Colonic mucosa (tissue), 4 donors: ENCODE measurements at regions of chr17 and their contacts with region 1.

Region 1: GRCh38 chr17:36591434-36592315 is at the start of gene DHRS11:
- DNase-seq: peak; percentile 91
- H3K4me3 ChIP-seq: peak within 1 kb of the TSS; percentile 99
- H3K27ac ChIP-seq: peak within 1 kb of the TSS; percentile 71
- H3K4me1 ChIP-seq: no peaks in the 10 kb centered on the region
- H3K27me3 ChIP-seq: no peaks in the 10 kb centered on the region
- CTCF ChIP-seq: no peak
- total RNA-seq, gene DHRS11: 147 to 191 TPM

Region 2: DNA sequence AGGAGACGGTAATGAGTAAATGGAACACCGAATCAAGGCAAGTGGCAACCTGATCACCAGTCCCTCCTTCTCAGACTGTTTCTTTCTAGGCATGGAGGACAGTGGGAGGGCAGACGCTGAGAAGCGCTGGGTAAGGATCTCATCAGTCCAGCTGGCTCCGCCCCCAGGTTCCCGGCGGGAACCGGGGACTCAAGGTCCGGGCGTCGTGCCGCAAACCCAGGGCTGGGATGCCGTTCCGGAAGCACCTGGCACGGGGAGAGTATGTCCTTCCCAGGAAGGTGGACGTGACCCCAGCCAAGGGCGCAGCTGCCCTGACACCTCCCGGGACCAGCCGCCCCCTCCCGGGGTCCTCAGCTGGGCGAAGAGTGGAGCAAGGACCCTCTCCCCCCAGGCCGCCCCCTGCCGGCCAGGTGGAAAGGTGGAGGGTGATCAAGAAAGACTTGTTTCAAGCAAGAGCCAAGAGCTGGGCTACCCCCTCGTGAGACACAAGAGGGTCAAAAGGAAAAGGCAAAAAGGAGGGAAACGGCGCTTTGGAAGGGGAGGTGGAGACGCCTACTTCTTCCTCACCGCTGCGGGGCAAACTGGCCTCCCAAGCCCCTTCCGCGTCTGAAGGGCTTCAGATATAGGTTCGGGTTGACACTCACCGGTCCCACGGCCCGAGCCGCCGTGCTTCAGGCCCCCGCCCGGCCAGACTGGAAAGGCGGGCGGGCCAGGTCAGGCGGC is 57.4 kb before region 1 on chr17:
- intact Hi-C with region 1: no loop called
- DNase-seq: peak; percentile 81
- H3K4me3 ChIP-seq: peak overlapping the region; percentile 87
- H3K27ac ChIP-seq: peak overlapping the region; percentile 93
- H3K4me1 ChIP-seq: peaks cover 4% of the 10 kb centered on the region
- H3K27me3 ChIP-seq: no peaks in the 10 kb centered on the region
- CTCF ChIP-seq: peak; percentile 52

Region 3: DNA sequence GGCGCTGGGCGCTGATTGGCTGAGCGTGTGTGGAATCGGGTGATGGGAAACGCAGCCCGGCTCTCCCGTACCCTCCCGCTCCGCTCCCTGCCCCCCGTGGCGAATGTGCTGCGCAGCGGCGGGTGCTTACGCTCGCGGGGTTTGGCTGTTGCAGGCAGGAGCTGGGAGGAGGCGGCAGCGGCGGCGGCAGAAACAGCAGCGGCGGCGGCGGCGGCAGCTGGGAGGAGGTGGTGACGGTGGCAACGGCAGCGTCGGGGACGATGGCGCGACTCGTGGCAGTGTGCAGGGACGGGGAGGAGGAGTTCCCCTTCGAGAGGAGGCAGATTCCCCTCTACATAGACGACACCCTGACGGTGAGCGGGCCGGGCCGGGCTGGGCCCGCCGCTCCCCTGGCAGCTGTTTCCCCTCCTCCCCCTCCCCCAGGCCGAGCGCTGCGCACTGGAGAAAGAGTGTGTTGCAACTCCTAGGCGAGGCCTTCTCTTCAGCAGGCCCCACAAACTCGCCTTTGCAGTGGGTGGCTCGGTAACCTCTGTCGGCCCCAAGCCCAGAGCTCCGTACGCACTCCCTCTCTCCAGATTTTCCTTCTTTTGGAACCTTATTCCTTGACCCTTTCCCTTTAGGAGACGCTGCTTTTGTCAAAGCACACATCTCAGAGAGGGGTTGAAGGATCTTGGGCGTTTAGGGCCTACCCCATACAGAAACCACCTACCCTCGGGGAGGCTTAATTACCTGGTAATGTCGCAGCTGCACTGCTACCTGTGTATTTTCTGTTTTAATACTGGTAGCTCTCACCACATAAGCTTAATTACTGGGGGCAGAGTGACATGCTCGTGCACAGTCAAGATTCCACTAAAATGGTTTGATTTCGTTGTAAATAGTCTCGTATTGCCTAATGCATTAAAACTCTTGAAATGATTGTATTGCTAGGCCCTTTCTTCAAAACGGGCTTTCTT is 45.9 kb before region 1 on chr17:
- intact Hi-C with region 1: loop called (anchors 5 kb)
- DNase-seq: peak; percentile 97
- H3K4me3 ChIP-seq: peak overlapping the region; percentile 95
- H3K27ac ChIP-seq: peak overlapping the region; percentile 99
- H3K4me1 ChIP-seq: peaks cover 18% of the 10 kb centered on the region
- H3K27me3 ChIP-seq: no peaks in the 10 kb centered on the region
- CTCF ChIP-seq: no peak